Sciatic nerve (tissue), 2 donors: ENCODE measurements at regions of chr10 and their contacts with region 1.

Region 1: GRCh38 chr10:8095959-8096358 is 41.5 kb downstream of the GATA3 start:
- DNase-seq: no peak
- ATAC-seq: no peak

Region 2: DNA sequence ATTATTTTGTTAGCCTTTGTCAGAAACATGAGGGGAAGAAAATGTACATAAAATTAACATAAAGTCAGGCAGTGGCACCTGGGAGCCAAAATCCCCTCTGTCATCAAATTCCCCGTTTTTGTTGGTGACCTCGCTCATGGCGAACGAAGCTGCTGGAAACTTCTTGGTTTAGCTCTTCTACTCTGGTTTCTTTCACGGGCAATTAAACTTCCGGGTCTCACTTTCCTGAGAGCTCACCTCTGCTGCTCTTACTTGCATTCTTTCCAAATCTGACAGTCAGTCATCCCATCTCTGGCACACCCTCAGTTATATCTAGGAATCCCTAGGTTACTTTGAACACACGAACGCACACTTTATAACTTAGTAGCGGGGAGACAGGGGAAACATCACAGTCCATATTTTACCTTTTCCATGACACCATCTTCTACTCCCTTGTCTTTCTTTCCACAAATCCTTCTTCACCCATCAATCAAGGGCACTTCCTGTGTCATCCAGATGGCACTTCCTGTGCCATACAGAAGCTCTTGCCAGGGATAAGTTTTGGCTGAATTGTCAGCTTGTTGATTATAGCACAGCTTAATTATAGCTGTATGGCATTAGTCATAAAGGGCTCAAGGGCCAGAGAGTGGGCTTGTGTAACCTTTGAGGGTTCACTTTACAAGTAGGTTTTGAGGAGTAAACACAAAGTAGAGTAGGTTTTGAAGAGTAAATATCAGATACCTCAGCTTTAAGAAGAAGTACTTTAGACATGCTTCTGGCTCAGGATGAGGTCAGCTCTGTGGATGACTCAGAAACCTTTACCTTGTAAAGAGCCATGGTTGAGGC is 63.6 kb after region 1 on chr10:
- intact Hi-C with region 1: loop called (anchors 2 kb)
- DNase-seq: no peak
- ATAC-seq: no peak

Region 3: DNA sequence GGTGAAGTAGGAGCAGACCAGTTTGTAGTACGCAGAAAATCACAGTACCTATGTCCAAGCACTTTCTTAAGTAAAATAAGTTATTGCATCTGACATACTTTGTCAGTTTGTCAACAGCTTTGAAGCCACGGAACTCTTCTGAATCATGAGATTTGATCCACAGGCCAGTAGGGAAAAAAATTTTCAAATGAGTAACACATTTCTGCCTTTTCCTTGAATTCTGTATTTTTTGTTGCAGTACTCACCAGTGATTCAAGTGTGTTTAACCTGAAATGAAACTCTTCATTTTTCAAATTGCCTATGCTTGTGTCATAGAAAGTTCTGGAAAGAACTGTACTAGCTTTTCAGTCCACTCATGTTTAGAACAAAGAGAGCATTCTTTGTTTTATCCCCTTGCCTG is 296.3 kb after region 1 on chr10:
- intact Hi-C with region 1: no loop called
- DNase-seq: no peak
- ATAC-seq: no peak

Region 4: DNA sequence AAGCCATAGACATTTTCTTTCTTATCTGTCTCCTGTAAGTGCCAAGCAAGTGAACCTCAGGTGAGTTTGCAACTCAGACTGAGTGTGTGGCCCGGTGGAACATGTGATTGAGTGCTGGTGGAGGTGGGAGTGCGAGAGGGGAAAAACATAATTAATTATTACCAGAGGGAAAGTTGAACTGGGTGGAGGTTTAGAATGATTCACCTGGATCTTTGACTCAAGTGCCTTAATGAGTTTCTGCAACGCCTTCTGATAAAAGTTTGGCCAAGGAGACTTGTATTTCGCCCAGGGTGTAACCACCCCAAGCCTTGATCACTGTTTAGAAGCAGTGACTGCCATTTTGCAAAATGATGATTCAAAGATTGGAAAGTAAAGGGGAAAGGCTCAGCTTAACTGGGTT is 472.4 kb after region 1 on chr10:
- intact Hi-C with region 1: no loop called
- DNase-seq: no peak
- ATAC-seq: no peak